HepG2 (cell line): ENCODE measurements at regions of chr6 and their contacts with region 1.

Region 1: GRCh38 chr6:11366183-11366933 is 133.9 kb upstream of the NEDD9 start:
- DNase-seq: no peak
- ATAC-seq: no peak
- H3K4me3 ChIP-seq: no peak overlapping the region
- H3K27ac ChIP-seq: peak overlapping the region; percentile 94
- H3K4me1 ChIP-seq: peaks cover 77% of the 10 kb centered on the region
- H3K27me3 ChIP-seq: no peaks in the 10 kb centered on the region
- CTCF ChIP-seq: no peak
- EP300 ChIP-seq: no peak; a peak in 1 of 4 replicates
- POLR2A ChIP-seq: no peak
- RAD21 ChIP-seq: no peak; the same call in 1 of the 2 replicates

Region 2: DNA sequence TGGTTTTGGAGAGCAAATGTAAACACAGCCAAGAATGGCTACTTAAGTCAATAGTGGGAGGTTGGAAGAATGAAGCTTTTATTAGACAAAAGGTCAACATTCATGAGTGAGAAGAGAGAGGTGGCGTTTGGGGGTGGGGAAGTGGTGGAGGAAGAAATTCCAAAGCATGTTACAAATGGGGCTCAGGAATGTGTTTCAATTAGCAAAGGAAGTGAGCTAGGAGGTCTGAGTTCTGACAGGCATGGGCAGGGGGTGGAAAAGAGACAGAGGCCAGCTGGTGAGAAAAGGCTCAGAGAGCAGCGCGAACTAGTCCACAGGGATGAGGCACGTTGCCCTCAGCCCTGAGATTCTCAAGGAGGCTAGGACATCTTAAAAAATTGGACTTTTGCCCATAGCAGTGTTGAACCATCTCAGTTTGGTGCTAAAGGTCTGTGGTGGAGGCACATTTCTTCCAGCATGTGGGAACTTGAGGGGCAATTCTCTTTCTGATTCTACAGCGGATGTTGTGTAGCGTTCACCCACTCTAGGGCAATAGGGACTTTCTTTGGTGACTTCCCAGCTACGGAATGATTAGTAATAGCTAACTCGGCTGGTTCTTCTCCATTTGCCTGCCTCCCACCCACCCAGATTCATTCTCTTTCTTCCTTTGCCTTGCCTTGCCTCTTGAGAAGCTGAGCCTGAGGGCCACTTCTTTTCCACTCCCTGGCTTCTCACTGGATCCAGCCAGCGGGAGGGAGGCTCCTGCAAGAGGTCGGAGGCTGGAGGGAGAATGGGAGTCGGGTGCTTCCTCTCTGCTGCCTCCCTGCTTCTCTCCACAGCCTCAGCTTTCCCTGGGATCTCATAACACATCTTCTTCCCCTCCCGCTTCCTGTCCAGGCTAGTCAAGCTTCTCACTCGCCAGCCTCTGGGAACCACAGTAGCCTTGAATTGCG is 88.8 kb before region 1 on chr6:
- CTCF ChIA-PET with region 1: no interaction called
- POLR2A ChIA-PET with region 1: interaction called, 17 read pairs
- in situ Hi-C with region 1: no loop called
- intact Hi-C with region 1: loop called (anchors 2 kb)
- DNase-seq: peak; percentile 90
- ATAC-seq: peak; percentile 54
- H3K4me3 ChIP-seq: peak overlapping the region in 1 of 3 experiments; percentile 18; a peak in 1 of 6 replicates
- H3K27ac ChIP-seq: peak overlapping the region; percentile 2
- H3K4me1 ChIP-seq: peaks cover 67% of the 10 kb centered on the region
- H3K27me3 ChIP-seq: no peaks in the 10 kb centered on the region
- CTCF ChIP-seq: no peak
- EP300 ChIP-seq: peak in 1 of 2 experiments; percentile 56; a peak in 1 of 4 replicates
- POLR2A ChIP-seq: no peak
- RAD21 ChIP-seq: no peak

Region 3: GRCh38 chr6:11380969-11381744 is 14.8 kb after region 1 on chr6:
- CTCF ChIA-PET with region 1: no interaction called
- POLR2A ChIA-PET with region 1: interaction called, 20 read pairs
- in situ Hi-C with region 1: no loop called
- intact Hi-C with region 1: no loop called
- DNase-seq: no peak
- ATAC-seq: no peak
- H3K4me3 ChIP-seq: no peak overlapping the region
- H3K27ac ChIP-seq: no peak overlapping the region
- H3K4me1 ChIP-seq: peaks cover 20% of the 10 kb centered on the region
- H3K27me3 ChIP-seq: no peaks in the 10 kb centered on the region
- CTCF ChIP-seq: no peak
- EP300 ChIP-seq: no peak
- POLR2A ChIP-seq: no peak
- RAD21 ChIP-seq: no peak

Region 4: DNA sequence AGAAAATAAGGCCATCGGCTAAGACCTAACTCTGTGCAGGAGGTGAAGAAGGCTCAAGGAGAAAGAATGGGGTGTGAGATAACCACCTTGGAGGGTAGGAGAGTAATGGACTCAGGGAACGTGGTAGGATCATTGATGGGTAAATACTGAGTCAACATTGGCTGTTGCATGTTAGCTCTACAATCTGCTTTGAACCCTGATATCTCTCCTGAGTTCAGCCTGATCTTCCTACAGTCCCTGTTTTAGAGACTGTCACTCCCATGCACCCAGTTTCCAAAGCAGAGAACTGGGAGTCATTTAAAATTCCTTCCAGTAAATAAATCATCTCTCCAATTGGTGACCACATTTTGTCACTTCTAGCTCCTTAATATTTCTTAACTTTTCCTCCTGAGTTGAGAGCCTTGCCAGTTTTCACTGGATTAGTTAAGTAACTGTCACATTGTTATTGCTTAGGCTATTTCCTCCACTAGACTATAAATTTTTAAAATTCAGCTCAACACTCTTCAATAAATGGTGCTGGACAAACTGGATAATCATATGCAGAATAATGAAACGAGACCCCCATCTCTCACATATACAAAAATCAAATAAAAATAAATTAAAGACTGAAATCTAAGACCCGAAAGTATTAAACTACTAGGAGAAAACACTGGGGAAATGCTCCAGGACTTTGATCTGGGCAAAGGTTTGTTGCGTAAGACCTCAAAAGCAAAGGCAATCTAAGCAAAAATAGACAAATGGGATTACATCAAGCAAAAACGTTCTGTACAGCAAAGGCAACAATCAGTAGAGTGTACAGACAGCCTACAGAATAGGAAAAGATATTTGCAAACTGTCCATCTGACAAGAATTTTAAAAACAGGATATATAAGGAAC is 32.3 kb after region 1 on chr6:
- CTCF ChIA-PET with region 1: no interaction called
- POLR2A ChIA-PET with region 1: interaction called, 37 read pairs
- in situ Hi-C with region 1: no loop called
- intact Hi-C with region 1: loop called (anchors 2 kb)
- DNase-seq: peak; percentile 97
- ATAC-seq: peak; percentile 88
- H3K4me3 ChIP-seq: peak overlapping the region in 1 of 3 experiments; percentile 19; a peak in 1 of 6 replicates
- H3K27ac ChIP-seq: peak overlapping the region; percentile 95
- H3K4me1 ChIP-seq: peaks cover 73% of the 10 kb centered on the region
- H3K27me3 ChIP-seq: no peaks in the 10 kb centered on the region
- CTCF ChIP-seq: no peak
- EP300 ChIP-seq: peak; percentile 76 to 98
- POLR2A ChIP-seq: peak; percentile 41 to 45; a peak in 2 of 4 replicates
- RAD21 ChIP-seq: no peak

Region 5: GRCh38 chr6:11434565-11435326 is 68.4 kb after region 1 on chr6:
- CTCF ChIA-PET with region 1: no interaction called
- POLR2A ChIA-PET with region 1: interaction called, 12 read pairs
- in situ Hi-C with region 1: no loop called
- intact Hi-C with region 1: loop called (anchors 1 kb)
- DNase-seq: peak; percentile 100
- ATAC-seq: peak; percentile 95
- H3K4me3 ChIP-seq: peak overlapping the region in 1 of 3 experiments; percentile 16; a peak in 1 of 6 replicates
- H3K27ac ChIP-seq: peak overlapping the region; percentile 69
- H3K4me1 ChIP-seq: peaks cover 78% of the 10 kb centered on the region
- H3K27me3 ChIP-seq: no peaks in the 10 kb centered on the region
- CTCF ChIP-seq: peak; percentile 33; the same call in 1 of the 2 replicates
- EP300 ChIP-seq: peak; percentile 91 to 95
- POLR2A ChIP-seq: no peak
- RAD21 ChIP-seq: no peak